ENCODE measurements at regions of chr11 and their contacts with region 1.

Region 1: GRCh38 chr11:43282607-43283440 is 29.0 kb upstream of the API5 start:
- DNase-seq: peak; percentile 60
- ATAC-seq: peak; percentile 47

Region 2: GRCh38 chr11:42770444-42771065 is 512.3 kb before region 1 on chr11:
- intact Hi-C with region 1: loop called (anchors 5 kb)
- DNase-seq: no peak
- ATAC-seq: no peak